CD4-positive, alpha-beta T cell (primary cell): ENCODE measurements at regions of chrX and their contacts with region 1.

Region 1: GRCh38 chrX:44244008-44244407 is 99.5 kb downstream of the EFHC2 start:
- DNase-seq: peak in 4 of 14 experiments; percentile 20 to 53 (median 48)
- ATAC-seq: no peak
- H3K4me3 ChIP-seq: no peak overlapping the region
- H3K4me3 Mint-ChIP-seq: no peak overlapping the region
- H3K27ac ChIP-seq: no peak overlapping the region
- H3K27ac Mint-ChIP-seq: peak overlapping the region; percentile 53
- H3K4me1 ChIP-seq: peaks cover 7% of the 10 kb centered on the region
- H3K4me1 Mint-ChIP-seq: peaks cover 39% of the 10 kb centered on the region
- H3K27me3 ChIP-seq: no peaks in the 10 kb centered on the region
- H3K27me3 Mint-ChIP-seq: no peaks in the 10 kb centered on the region
- CTCF ChIP-seq: peak; percentile 65

Region 2: DNA sequence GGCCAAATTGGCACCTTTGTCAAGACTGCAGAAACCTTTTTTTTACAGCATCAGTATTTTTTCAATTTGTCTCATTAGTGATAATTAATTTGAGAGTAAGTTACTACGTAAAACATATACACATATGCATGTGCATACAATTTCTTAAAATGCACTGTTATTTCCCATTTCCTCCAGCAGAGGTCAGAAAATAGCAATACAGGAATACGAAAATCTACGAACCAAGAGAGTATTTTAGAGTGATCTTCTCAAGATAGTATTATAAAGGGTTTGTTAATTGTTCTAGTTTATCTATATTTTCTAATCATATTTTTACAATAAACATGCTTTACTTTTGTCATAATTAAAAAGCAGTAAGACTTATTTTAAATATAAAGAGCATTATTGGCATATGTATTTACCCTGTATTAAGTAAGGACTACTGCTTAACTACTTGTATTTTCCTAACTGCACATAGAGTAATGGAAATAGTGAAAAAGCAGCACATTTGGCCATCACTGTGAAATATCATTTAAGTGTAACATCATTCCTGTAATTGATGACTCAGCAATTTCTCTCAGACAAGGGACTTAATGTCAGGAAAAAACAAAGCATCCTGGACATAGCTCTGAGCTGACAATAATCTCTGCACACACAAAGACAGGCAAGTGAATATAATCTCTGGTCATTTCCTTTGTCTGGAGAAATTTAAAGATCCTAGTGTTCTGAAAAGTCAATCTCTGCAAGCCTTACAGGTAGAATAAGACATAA is 407.4 kb before region 1 on chrX:
- CTCF ChIA-PET with region 1: interaction called, 3 read pairs
- POLR2A ChIA-PET with region 1: interaction called, 3 read pairs
- intact Hi-C with region 1: loop called (anchors 2 to 5 kb)
- DNase-seq: peak in 3 of 14 experiments; percentile 25 to 32 (median 32)
- ATAC-seq: no peak
- H3K4me3 ChIP-seq: no peak overlapping the region
- H3K4me3 Mint-ChIP-seq: no peak overlapping the region
- H3K27ac ChIP-seq: no peak overlapping the region
- H3K27ac Mint-ChIP-seq: no peak overlapping the region
- H3K4me1 ChIP-seq: no peaks in the 10 kb centered on the region
- H3K4me1 Mint-ChIP-seq: no peaks in the 10 kb centered on the region
- H3K27me3 ChIP-seq: peaks cover 0 to 3% of the 10 kb centered on the region in 2 experiments
- H3K27me3 Mint-ChIP-seq: no peaks in the 10 kb centered on the region
- CTCF ChIP-seq: peak; percentile 63

Region 3: DNA sequence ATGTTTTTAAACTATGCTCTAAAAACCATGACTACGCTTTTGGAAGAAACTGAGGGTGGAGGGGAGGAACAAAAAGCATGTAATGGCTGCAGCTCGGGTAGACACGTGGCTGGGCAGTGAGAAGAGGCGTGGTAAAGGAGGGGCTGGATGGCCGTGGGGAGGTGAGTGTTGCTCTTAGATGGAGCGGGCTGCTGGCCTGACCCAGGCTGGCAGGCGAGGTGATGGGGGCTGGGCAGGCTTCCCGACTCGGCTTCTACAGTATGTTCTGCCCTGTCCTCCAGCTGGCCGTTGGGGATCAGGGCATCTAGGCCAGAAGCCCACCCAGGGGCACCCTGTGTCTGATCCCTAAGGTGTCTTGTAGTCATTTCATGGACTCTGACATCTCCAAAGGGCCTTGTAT is 38.7 kb after region 1 on chrX:
- CTCF ChIA-PET with region 1: no interaction called
- POLR2A ChIA-PET with region 1: no interaction called
- intact Hi-C with region 1: loop called in 1 of 2 experiments (anchors 5 kb)
- DNase-seq: no peak
- ATAC-seq: no peak
- H3K4me3 ChIP-seq: no peak overlapping the region
- H3K4me3 Mint-ChIP-seq: no peak overlapping the region
- H3K27ac ChIP-seq: no peak overlapping the region
- H3K27ac Mint-ChIP-seq: no peak overlapping the region
- H3K4me1 ChIP-seq: no peaks in the 10 kb centered on the region
- H3K4me1 Mint-ChIP-seq: no peaks in the 10 kb centered on the region
- H3K27me3 ChIP-seq: no peaks in the 10 kb centered on the region
- H3K27me3 Mint-ChIP-seq: no peaks in the 10 kb centered on the region
- CTCF ChIP-seq: no peak

Region 4: GRCh38 chrX:44542567-44543325 is 298.7 kb after region 1 on chrX and contains the start of gene FUNDC1:
- CTCF ChIA-PET with region 1: interaction called, 3 read pairs
- POLR2A ChIA-PET with region 1: no interaction called
- intact Hi-C with region 1: loop called (anchors 10 kb)
- DNase-seq: peak; percentile 77 to 97 (median 90)
- ATAC-seq: peak; percentile 94
- H3K4me3 ChIP-seq: peak within 1 kb of the TSS; percentile 88
- H3K4me3 Mint-ChIP-seq: peak within 1 kb of the TSS; percentile 100
- H3K27ac ChIP-seq: peak within 1 kb of the TSS; percentile 46 to 54
- H3K27ac Mint-ChIP-seq: peak within 1 kb of the TSS; percentile 97
- H3K4me1 ChIP-seq: peaks cover 9% of the 10 kb centered on the region
- H3K4me1 Mint-ChIP-seq: peaks cover 37% of the 10 kb centered on the region
- H3K27me3 ChIP-seq: no peaks in the 10 kb centered on the region
- H3K27me3 Mint-ChIP-seq: no peaks in the 10 kb centered on the region
- CTCF ChIP-seq: no peak
- total RNA-seq, gene FUNDC1: 4.8 to 5.4 TPM